ENCODE measurements at regions of chr2 and their contacts with region 1.

Region 1: GRCh38 chr2:231612179-231613053 is 19.8 kb downstream of the TEX44 start:
- DNase-seq: peak; percentile 73 to 94
- H3K4me3 ChIP-seq: no peak overlapping the region
- H3K4me1 ChIP-seq: peaks cover 28% of the 10 kb centered on the region
- H3K27me3 ChIP-seq: no peaks in the 10 kb centered on the region

Region 2: GRCh38 chr2:231662028-231662810 is 49.8 kb after region 1 on chr2:
- in situ Hi-C with region 1: loop called (anchors 5 kb)
- DNase-seq: peak; percentile 94 to 96
- H3K4me3 ChIP-seq: peak overlapping the region; percentile 32
- H3K4me1 ChIP-seq: peaks cover 23% of the 10 kb centered on the region
- H3K27me3 ChIP-seq: no peaks in the 10 kb centered on the region

Region 3: DNA sequence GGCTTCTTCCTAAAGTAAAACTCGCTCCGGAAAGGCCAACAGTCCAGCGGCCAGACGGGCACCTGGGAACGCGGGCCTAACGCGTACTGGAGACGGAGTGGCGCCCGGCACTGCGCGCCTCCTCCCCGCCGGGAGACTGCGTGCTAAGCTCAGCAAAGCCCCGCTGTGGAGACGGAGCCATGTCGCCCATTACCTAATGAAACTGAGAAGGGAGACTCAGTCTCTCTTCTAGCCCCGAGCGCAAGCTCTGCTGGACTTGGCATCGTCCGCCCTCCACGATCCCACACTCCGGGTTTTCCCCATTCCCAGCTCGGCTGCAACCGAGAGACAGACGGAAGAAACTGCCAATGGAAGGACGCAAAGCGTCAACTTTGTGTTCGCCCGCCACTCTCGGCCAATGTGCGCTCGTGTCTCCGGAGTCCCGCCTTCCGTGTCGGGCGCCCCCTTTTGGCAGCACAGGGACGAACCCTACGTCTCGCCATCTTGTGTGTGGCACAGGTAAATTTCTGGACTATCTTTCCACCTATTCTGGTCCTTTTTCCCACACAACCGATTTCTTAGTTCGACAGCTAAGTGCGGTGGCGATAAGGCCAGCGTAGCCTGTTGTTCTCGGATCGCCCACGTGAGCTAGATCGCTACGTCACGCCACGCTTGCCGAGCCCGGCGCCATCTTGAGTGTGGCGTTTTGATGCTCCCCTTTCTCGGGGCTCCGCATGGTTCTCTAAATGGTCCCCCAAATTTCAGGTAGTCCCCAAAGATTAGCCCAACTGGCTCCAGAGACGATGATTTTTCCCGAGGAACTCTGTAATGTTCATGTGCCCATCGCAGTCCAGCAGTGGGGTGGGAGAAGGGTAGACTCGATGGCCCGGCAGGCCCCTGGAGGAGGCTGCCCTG is 94.6 kb after region 1 on chr2:
- in situ Hi-C with region 1: loop called (anchors 5 kb)
- DNase-seq: peak; percentile 93 to 98
- H3K4me3 ChIP-seq: peak overlapping the region; percentile 99
- H3K4me1 ChIP-seq: peaks cover 13% of the 10 kb centered on the region
- H3K27me3 ChIP-seq: no peaks in the 10 kb centered on the region

Region 4: GRCh38 chr2:231780909-231781797 is 168.7 kb after region 1 on chr2 and contains the start of gene PDE6D:
- in situ Hi-C with region 1: loop called (anchors 10 kb)
- DNase-seq: peak; percentile 90 to 99
- H3K4me3 ChIP-seq: peak within 1 kb of the TSS; percentile 88
- H3K4me1 ChIP-seq: peaks cover 11% of the 10 kb centered on the region
- H3K27me3 ChIP-seq: no peaks in the 10 kb centered on the region